ENCODE measurements at regions of chr17 and their contacts with region 1.

Region 1: DNA sequence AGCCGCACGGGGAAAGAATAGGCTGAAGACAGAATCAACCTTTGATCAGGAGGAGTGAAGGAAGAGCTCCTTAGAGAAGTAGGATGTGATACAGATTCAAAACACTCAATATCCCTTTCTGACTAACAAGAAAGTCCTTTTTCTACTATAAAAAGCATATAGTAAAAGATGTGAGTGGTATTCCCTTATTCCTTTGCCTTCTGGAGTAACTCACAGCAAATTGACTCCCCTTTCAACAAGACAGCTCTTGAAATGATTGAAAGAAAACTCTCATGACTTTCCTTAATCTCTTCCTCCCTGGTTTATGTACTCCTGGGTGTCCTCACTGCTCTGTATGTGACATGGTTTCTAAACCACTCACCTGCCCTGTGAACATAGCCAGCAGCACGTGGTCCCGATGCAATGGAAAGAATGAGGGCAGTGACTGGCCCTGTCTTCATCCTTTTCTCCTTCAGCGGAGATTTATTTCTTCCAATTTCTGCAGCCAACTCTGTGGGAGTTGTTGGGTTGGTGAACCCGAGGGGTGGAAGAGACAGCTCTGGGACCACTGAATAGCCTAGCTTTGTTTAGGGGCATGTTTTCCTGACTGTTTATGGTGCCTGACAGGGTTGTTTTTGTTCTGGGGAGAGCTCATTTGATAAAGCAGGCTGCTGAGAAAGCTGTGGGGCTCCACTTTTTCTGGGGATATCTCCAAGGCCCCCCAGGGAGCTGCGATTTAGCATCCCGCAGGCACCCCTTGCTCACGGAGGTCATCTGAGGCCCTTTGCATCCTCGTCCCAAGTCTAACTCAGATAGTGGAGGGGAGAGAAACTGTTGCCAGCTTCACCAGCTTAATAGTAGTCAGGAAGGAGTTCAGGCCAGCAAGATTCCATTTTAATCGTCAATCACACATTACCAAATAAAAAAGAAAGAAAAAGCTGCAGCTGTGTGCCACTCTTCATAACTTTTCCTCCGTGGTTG is 46.7 kb downstream of the MAP2K6 start:
- DNase-seq: peak; percentile 28 to 69
- ATAC-seq: peak; percentile 77 to 86 (median 81)
- H3K4me3 ChIP-seq: peak overlapping the region; percentile 57
- H3K27ac ChIP-seq: peak overlapping the region; percentile 80
- H3K4me1 ChIP-seq: peaks cover 15% of the 10 kb centered on the region
- H3K27me3 ChIP-seq: no peaks in the 10 kb centered on the region
- CTCF ChIP-seq: no peak

Region 2: DNA sequence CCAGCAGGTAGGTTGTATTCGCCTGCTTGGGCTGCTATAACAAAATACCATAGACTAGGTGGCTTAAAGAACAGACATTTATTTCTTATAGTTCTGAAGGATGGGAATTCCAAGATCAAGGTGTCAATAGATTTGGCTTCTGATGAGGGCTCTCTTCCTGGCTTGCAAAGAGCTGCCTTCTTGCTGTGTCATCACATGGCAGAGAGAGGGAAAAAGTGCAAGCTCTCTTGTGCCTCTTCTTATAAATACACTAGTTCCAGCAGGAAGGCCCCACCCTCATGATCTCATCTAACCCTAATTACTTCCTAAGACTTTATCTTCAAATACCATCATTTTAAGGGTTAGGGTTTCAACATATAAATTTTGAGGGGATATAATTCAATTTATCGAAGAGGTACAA is 431.1 kb before region 1 on chr17:
- intact Hi-C with region 1: no loop called
- DNase-seq: no peak
- ATAC-seq: no peak
- H3K4me3 ChIP-seq: no peak overlapping the region
- H3K27ac ChIP-seq: no peak overlapping the region
- H3K4me1 ChIP-seq: no peaks in the 10 kb centered on the region
- H3K27me3 ChIP-seq: no peaks in the 10 kb centered on the region
- CTCF ChIP-seq: no peak

Region 3: DNA sequence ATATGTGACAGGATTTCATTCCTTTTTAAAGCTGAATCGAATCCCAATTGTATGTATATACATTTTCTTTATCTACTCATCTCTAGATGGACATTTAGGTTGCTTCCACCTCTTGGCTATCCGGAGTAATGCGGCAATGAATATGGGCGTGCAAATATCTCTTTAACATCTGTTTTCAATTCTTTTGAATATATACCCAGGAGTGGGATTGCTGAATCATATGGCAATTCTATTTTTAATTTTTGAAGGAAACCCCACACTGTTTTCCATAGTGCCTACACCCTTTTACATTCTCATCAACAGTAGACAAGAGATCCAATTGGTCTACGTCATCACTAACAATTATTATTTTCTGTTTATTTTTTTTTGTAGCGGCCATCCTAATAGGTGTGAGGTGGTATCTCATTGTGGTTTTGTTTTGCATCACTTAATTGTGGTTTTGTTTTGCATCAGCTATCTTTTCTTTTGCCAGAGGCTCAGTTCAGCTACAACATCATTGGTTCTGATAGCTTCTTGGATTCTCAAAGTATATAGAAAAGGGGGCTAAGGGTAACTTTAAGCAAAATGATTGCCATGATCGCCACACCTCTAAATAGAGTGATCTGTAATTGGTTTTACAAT is 72.3 kb before region 1 on chr17:
- intact Hi-C with region 1: no loop called
- DNase-seq: no peak
- ATAC-seq: no peak
- H3K4me3 ChIP-seq: no peak overlapping the region
- H3K27ac ChIP-seq: no peak overlapping the region
- H3K4me1 ChIP-seq: no peaks in the 10 kb centered on the region
- H3K27me3 ChIP-seq: no peaks in the 10 kb centered on the region
- CTCF ChIP-seq: no peak

Region 4: GRCh38 chr17:69404382-69404781 is 56.9 kb before region 1 on chr17:
- intact Hi-C with region 1: no loop called
- DNase-seq: no peak
- ATAC-seq: no peak
- H3K4me3 ChIP-seq: no peak overlapping the region
- H3K27ac ChIP-seq: no peak overlapping the region
- H3K4me1 ChIP-seq: no peaks in the 10 kb centered on the region
- H3K27me3 ChIP-seq: no peaks in the 10 kb centered on the region
- CTCF ChIP-seq: no peak

Region 5: GRCh38 chr17:69478916-69479315 is 17.7 kb after region 1 on chr17:
- intact Hi-C with region 1: loop called in 1 of 2 experiments (anchors 2 kb)
- DNase-seq: no peak
- ATAC-seq: no peak
- H3K4me3 ChIP-seq: no peak overlapping the region
- H3K27ac ChIP-seq: peak overlapping the region; percentile 80
- H3K4me1 ChIP-seq: peaks cover 15% of the 10 kb centered on the region
- H3K27me3 ChIP-seq: no peaks in the 10 kb centered on the region
- CTCF ChIP-seq: no peak